H1 (cell line): ENCODE measurements at regions of chr6 and their contacts with region 1.

Region 1: GRCh38 chr6:29626948-29627754 is 5.8 kb downstream of the GABBR1 start:
- DNase-seq: no peak
- H3K4me3 ChIP-seq: peak overlapping the region; percentile 61 to 92 (median 70)
- H3K27ac ChIP-seq: no peak overlapping the region
- H3K4me1 ChIP-seq: peaks cover 6 to 52% (median 37%) of the 10 kb centered on the region in 4 experiments
- H3K27me3 ChIP-seq: no peaks in the 10 kb centered on the region
- CTCF ChIP-seq: no peak
- EP300 ChIP-seq: no peak
- POLR2A ChIP-seq: no peak
- RAD21 ChIP-seq: no peak

Region 2: GRCh38 chr6:29602564-29603361 is 24.4 kb before region 1 on chr6:
- CTCF ChIA-PET with region 1: interaction called, 11 read pairs
- POLR2A ChIA-PET with region 1: interaction called, 58 read pairs
- DNase-seq: peak in 1 of 2 experiments; percentile 63
- H3K4me3 ChIP-seq: no peak overlapping the region
- H3K27ac ChIP-seq: 0 out of 2 replicates have a peak overlapping the region, but pooled peaks have one; percentile 19
- H3K4me1 ChIP-seq: peaks cover 0 to 10% (median 0%) of the 10 kb centered on the region in 4 experiments; a peak in 3 of 7 replicates
- H3K27me3 ChIP-seq: no peaks in the 10 kb centered on the region
- CTCF ChIP-seq: peak; percentile 38 to 64 (median 47); a peak in 3 of 4 replicates
- EP300 ChIP-seq: no peak
- POLR2A ChIP-seq: no peak
- RAD21 ChIP-seq: peak; percentile 32 to 48; a peak in 3 of 4 replicates

Region 3: GRCh38 chr6:29608131-29608530 is 19.0 kb before region 1 on chr6:
- CTCF ChIA-PET with region 1: interaction called, 12 read pairs
- POLR2A ChIA-PET with region 1: interaction called, 58 read pairs
- DNase-seq: no peak
- H3K4me3 ChIP-seq: no peak overlapping the region
- H3K27ac ChIP-seq: no peak overlapping the region
- H3K4me1 ChIP-seq: peaks cover 0 to 4% (median 0%) of the 10 kb centered on the region in 4 experiments; a peak in 3 of 7 replicates
- H3K27me3 ChIP-seq: no peaks in the 10 kb centered on the region
- CTCF ChIP-seq: no peak
- EP300 ChIP-seq: no peak
- POLR2A ChIP-seq: no peak
- RAD21 ChIP-seq: no peak

Region 4: DNA sequence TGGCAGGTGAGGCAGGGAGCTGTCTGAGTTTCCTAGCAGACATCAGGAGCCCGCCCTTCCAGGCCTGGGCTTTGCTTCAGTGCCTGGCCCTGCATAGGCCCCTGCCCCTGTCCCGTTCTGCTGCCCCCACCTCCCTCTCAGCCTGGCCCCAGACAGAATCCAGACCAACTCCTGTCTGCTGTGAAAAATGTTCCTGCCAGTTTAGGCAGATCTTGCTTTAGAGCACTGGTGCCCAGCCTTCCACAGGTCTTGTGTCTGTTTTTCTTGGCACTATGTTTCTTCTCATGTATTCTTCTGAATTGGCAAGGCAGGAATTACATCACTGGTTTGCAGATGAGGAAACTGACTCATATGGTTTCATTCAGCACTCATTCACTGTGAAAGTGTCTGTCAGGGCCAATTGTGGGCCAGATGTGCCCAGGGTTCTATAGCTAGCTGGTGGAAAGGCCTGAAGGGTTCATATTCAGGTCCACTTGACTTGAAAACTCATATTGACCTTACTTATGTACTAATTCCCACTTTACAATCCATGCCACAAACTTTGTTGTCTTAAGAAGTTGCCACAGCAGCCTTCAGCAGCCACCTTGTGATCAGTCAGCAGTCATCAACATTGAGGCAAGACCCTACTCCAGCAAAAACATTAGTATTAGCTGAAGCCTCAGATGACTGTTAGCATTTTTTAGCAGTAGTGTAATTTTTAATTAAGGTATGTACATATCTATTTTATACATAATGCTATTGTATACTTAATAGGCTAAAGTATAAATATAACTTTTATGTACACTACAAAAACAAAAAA is 136.5 kb after region 1 on chr6:
- CTCF ChIA-PET with region 1: no interaction called
- POLR2A ChIA-PET with region 1: no interaction called
- DNase-seq: no peak
- H3K4me3 ChIP-seq: no peak overlapping the region
- H3K27ac ChIP-seq: no peak overlapping the region
- H3K4me1 ChIP-seq: peaks cover 5 to 17% (median 11%) of the 10 kb centered on the region in 4 experiments; a peak in 6 of 7 replicates
- H3K27me3 ChIP-seq: no peaks in the 10 kb centered on the region
- CTCF ChIP-seq: no peak
- EP300 ChIP-seq: no peak
- POLR2A ChIP-seq: no peak
- RAD21 ChIP-seq: no peak

Region 5: DNA sequence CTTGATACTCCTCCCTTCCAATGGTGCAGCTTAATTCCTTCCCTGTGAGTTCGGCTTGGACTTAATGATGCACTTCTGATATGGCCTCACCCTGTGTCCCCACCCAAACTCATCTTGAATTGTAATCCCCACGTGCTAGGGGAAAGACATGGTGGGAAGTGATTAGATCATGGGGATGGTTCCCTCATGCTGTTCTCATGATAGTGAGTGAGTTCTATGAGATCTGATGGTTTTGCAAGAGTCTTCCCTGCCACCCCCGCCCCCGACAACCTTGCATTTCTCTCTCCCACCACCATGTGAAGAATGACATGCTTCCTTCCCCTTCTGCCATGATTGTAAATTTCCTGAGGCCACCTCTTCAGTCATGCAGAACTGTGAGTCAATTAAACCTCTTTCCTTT is 150.2 kb after region 1 on chr6:
- CTCF ChIA-PET with region 1: no interaction called
- POLR2A ChIA-PET with region 1: no interaction called
- DNase-seq: no peak
- H3K4me3 ChIP-seq: no peak overlapping the region
- H3K27ac ChIP-seq: no peak overlapping the region
- H3K4me1 ChIP-seq: peaks cover 0 to 5% (median 0%) of the 10 kb centered on the region in 4 experiments; a peak in 1 of 7 replicates
- H3K27me3 ChIP-seq: no peaks in the 10 kb centered on the region
- CTCF ChIP-seq: no peak
- EP300 ChIP-seq: no peak
- POLR2A ChIP-seq: no peak
- RAD21 ChIP-seq: no peak